Activated naive CD4-positive, alpha-beta T cell treated with anti-CD3 and anti-CD28 coated beads for 36 hours (primary cell): ENCODE measurements at regions of chr11 and their contacts with region 1.

Region 1: DNA sequence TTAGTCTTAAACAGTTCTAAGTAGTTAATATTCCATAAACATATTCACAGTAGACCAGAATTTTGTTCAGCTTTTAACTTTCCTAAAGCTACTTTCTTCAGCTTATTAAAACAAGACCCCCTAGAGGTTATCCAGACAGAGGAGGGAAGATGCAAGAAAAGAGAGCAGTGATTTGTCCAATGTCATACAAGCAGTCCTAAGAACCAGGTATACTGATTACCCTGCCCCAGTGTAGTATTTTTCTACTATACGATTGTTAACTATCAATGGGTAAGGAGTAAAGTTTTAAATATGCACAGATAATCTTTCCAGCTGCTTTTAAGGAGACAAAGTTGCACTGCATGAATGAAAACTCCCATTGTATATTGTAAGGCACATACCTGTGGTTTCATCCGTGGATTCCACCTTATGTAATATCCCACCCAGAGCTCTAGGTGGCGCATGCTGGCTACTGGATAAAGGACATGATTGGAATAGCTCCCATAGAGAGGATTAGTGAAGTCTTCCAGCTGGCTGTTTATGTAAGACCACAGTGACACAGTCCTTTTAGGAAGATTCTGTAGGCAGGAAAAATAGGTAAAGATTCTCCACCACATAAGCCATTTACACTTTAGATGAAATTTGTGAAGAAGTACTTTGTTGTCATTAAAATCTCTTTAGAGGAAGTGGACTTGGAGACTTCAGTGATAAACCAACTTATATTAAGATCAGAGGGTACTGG is 45.6 kb downstream of the CEP57 start:
- DNase-seq: peak; percentile 77
- H3K4me3 Mint-ChIP-seq: no peak overlapping the region
- H3K27ac Mint-ChIP-seq: no peak overlapping the region
- H3K4me1 Mint-ChIP-seq: peaks cover 4% of the 10 kb centered on the region
- H3K27me3 Mint-ChIP-seq: no peaks in the 10 kb centered on the region

Region 2: GRCh38 chr11:95849087-95849825 is 13.3 kb after region 1 on chr11:
- CTCF ChIA-PET with region 1: interaction called, 12 read pairs
- intact Hi-C with region 1: no loop called
- DNase-seq: peak; percentile 65
- H3K4me3 Mint-ChIP-seq: no peak overlapping the region
- H3K27ac Mint-ChIP-seq: no peak overlapping the region
- H3K4me1 Mint-ChIP-seq: no peaks in the 10 kb centered on the region
- H3K27me3 Mint-ChIP-seq: no peaks in the 10 kb centered on the region

Region 3: DNA sequence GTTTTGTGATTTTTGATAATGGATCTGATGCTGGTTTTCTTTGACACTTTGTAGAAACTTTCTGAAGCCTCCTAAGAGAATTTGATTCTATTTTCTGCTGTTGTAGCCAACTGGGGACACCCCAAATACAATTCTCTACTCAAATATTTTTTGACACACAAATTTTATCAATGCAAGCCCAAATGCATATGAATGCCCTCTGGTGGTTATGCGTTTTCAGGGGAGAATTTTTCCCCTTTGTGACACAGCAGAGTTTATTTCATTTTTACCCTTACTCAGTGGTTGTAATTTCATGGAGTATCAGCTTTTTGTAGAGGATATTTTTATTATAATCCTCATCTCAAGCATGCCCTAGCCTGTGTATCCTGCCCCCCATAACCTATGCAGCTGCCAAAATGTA is 132.7 kb after region 1 on chr11:
- CTCF ChIA-PET with region 1: interaction called, 3 read pairs
- intact Hi-C with region 1: loop called (anchors 5 kb)
- DNase-seq: no peak
- H3K4me3 Mint-ChIP-seq: no peak overlapping the region
- H3K27ac Mint-ChIP-seq: no peak overlapping the region
- H3K4me1 Mint-ChIP-seq: no peaks in the 10 kb centered on the region
- H3K27me3 Mint-ChIP-seq: no peaks in the 10 kb centered on the region

Region 4: GRCh38 chr11:96054870-96055705 is 219.2 kb after region 1 on chr11:
- CTCF ChIA-PET with region 1: interaction called, 3 read pairs
- intact Hi-C with region 1: loop called (anchors 5 kb)
- DNase-seq: no peak
- H3K4me3 Mint-ChIP-seq: no peak overlapping the region
- H3K27ac Mint-ChIP-seq: peak overlapping the region; percentile 87
- H3K4me1 Mint-ChIP-seq: peaks cover 81% of the 10 kb centered on the region
- H3K27me3 Mint-ChIP-seq: no peaks in the 10 kb centered on the region

Region 5: GRCh38 chr11:96168623-96169022 is 332.7 kb after region 1 on chr11:
- CTCF ChIA-PET with region 1: no interaction called
- intact Hi-C with region 1: no loop called
- DNase-seq: no peak
- H3K4me3 Mint-ChIP-seq: no peak overlapping the region
- H3K27ac Mint-ChIP-seq: no peak overlapping the region
- H3K4me1 Mint-ChIP-seq: peaks cover 85% of the 10 kb centered on the region
- H3K27me3 Mint-ChIP-seq: no peaks in the 10 kb centered on the region

Region 6: GRCh38 chr11:96242971-96243647 is 407.2 kb after region 1 on chr11:
- CTCF ChIA-PET with region 1: interaction called, 5 read pairs
- intact Hi-C with region 1: loop called (anchors 5 kb)
- DNase-seq: peak; percentile 94
- H3K4me3 Mint-ChIP-seq: peak overlapping the region; percentile 84
- H3K27ac Mint-ChIP-seq: peak overlapping the region; percentile 95
- H3K4me1 Mint-ChIP-seq: peaks cover 54% of the 10 kb centered on the region
- H3K27me3 Mint-ChIP-seq: no peaks in the 10 kb centered on the region

Region 7: DNA sequence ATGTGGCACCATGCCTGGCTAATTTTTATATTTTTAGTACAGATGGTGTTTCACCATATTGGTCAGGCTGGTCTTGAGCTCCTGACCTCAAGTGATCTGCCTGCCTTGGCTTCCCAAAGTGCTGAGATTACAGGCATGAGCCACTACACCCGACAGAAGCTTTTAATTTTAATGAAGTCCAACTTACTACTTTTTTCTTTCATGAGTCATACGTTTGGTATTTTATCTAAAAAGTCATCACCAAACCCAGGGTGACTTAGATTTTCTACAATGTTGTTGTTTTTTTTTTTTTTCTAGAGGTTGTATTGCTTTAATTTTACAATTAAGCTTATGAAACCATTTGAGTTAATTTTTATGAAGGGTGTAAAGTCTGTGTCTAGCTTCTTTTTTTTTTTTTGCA is 588.8 kb after region 1 on chr11:
- CTCF ChIA-PET with region 1: interaction called, 9 read pairs
- intact Hi-C with region 1: loop called (anchors 1 kb)
- DNase-seq: no peak
- H3K4me3 Mint-ChIP-seq: no peak overlapping the region
- H3K27ac Mint-ChIP-seq: no peak overlapping the region
- H3K4me1 Mint-ChIP-seq: peaks cover 4% of the 10 kb centered on the region
- H3K27me3 Mint-ChIP-seq: peaks cover 17% of the 10 kb centered on the region